IMR-90 (cell line): ENCODE measurements at regions of chr3 and their contacts with region 1.

Region 1: DNA sequence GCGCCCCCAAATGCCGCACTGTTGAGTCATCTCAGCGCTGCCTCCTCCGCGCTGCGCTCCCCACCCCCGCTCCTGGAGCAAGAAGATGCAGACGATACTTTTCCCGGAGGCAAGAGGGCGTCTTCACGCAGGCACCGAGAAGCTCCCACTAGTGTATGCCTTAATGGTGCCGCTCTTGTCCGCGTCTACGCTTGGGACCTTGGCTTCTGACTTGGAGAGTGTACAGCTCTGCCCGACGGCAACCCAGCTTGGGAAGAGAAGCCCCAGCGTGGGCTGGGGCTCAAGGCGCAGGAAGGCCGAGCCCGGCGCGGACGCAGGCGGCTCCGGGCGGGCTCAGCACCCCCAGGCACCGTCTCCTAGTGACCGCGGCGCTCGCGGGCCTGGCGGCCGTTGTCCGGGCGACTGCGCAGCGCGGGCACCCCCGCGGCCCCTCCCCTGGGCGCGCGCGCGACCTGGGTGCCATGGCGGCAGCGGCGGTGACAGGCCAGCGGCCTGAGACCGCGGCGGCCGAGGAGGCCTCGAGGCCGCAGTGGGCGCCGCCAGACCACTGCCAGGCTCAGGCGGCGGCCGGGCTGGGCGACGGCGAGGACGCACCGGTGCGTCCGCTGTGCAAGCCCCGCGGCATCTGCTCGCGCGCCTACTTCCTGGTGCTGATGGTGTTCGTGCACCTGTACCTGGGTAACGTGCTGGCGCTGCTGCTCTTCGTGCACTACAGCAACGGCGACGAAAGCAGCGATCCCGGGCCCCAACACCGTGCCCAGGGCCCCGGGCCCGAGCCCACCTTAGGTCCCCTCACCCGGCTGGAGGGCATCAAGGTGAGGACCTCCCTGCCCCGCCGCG is at the start of gene P4HTM:
- DNase-seq: peak; percentile 93
- ATAC-seq: peak; percentile 89
- H3K4me3 ChIP-seq: peak within 1 kb of the TSS; percentile 72
- H3K27ac ChIP-seq: peak within 1 kb of the TSS; percentile 94
- H3K4me1 ChIP-seq: peaks cover 14% of the 10 kb centered on the region
- H3K27me3 ChIP-seq: no peaks in the 10 kb centered on the region
- CTCF ChIP-seq: peak; percentile 49
- POLR2A ChIP-seq: peak; percentile 77
- RAD21 ChIP-seq: peak; percentile 42
- total RNA-seq, gene P4HTM: 10.4 and 11.1 TPM in 2 replicates

Region 2: DNA sequence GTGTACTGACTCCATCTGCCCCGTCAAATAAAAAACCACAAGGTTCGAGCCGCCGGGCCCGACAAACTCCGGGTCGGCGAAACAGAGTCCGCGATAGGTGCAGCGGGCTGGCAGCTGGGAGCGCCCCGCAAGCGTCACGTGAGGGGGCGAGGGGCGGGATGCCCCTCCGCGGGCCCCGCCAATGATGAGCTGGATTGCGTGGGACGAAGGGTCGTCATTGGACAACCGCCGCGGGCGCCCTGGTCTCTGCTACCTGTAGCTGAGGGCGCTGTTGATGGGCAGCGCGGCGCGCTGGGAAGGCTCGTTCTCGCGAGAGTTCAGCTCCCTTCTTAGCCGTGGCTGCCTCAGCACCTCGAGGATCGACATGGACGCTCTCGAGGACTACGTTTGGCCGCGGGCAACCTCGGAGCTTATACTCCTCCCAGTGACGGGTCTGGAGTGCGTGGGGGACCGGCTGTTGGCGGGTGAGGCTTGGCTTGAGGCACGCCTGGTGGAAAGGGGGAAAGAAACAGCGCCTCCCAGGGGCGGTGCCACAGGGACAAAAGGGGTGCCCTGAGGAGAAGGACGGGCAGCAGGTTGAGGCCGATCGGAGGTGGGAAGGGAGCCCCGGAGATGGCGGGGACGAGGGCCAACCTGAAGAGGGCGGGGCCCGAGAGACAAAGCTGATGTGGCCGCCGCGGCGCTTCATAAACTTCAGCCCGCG is 17.2 kb after region 1 on chr3 and contains the start of gene WDR6:
- CTCF ChIA-PET with region 1: interaction called, 10 read pairs
- POLR2A ChIA-PET with region 1: interaction called, 9 read pairs
- dilution Hi-C with region 1: no loop called
- in situ Hi-C with region 1: no loop called
- intact Hi-C with region 1: loop called (anchors 2 kb)
- DNase-seq: peak; percentile 97
- ATAC-seq: peak; percentile 87
- H3K4me3 ChIP-seq: peak within 1 kb of the TSS; percentile 87
- H3K27ac ChIP-seq: peak within 1 kb of the TSS; percentile 99
- H3K4me1 ChIP-seq: peaks cover 11% of the 10 kb centered on the region
- H3K27me3 ChIP-seq: no peaks in the 10 kb centered on the region
- CTCF ChIP-seq: peak; percentile 36
- POLR2A ChIP-seq: peak; percentile 90
- RAD21 ChIP-seq: peak; percentile 4; the same call in 1 of the 2 replicates
- total RNA-seq, gene WDR6: 55.8 and 60.9 TPM in 2 replicates

Region 3: DNA sequence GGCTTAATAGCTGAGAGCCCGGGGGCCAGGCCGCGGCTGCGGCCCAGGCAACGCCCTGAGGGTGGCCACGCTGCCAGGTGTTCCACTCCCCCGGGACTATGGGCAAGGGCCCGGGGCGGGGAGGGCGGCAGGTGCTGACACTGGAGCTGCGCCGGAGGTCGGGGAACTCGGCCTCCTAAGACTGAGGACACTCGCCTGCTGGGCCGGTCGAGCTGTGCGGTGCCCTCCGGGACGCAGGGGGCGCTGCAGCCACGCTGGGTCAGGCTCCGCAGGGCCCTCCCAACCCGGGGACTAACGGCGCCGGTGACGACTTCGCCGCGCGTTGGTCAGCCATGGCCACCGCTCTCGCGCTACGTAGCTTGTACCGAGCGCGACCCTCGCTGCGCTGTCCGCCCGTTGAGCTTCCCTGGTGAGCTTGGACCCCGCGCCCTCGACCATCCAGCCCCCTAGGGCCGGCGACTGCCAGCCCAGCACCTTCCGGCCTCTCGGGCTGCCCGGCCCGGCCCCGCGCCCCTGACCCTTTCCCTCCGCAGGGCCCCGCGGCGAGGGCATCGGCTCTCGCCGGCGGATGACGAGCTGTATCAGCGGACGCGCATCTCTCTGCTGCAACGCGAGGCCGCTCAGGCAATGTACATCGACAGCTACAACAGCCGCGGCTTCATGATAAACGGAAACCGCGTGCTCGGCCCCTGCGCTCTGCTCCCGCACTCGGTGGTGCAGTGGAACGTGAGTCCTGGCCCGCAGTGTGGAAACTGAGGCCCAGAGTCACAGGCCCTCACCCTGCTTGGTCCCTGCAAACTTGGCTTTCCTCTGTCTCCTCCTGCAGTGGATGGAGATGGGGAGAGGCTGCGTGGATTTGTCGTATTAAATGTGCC is 32.0 kb after region 1 on chr3 and contains the start of gene NDUFAF3:
- CTCF ChIA-PET with region 1: interaction called, 3 read pairs
- POLR2A ChIA-PET with region 1: no interaction called
- dilution Hi-C with region 1: no loop called
- in situ Hi-C with region 1: no loop called
- intact Hi-C with region 1: loop called (anchors 2 kb)
- DNase-seq: peak; percentile 92
- ATAC-seq: peak; percentile 74
- H3K4me3 ChIP-seq: peak within 1 kb of the TSS; percentile 84
- H3K27ac ChIP-seq: peak within 1 kb of the TSS; percentile 93
- H3K4me1 ChIP-seq: peaks cover 10% of the 10 kb centered on the region
- H3K27me3 ChIP-seq: no peaks in the 10 kb centered on the region
- CTCF ChIP-seq: peak; percentile 96
- POLR2A ChIP-seq: peak; percentile 40; the same call in 1 of the 2 replicates
- RAD21 ChIP-seq: no peak
- total RNA-seq, gene NDUFAF3: 26.5 and 43.3 TPM in 2 replicates

Region 4: GRCh38 chr3:49093853-49094767 is 104.1 kb after region 1 on chr3 and contains the start of gene QRICH1:
- CTCF ChIA-PET with region 1: interaction called, 17 read pairs
- POLR2A ChIA-PET with region 1: no interaction called
- dilution Hi-C with region 1: no loop called
- in situ Hi-C with region 1: no loop called
- intact Hi-C with region 1: loop called (anchors 1 kb)
- DNase-seq: peak; percentile 97
- ATAC-seq: peak; percentile 87
- H3K4me3 ChIP-seq: peak within 1 kb of the TSS; percentile 85
- H3K27ac ChIP-seq: peak within 1 kb of the TSS; percentile 82
- H3K4me1 ChIP-seq: peaks cover 2% of the 10 kb centered on the region; the same call in 1 of the 2 replicates
- H3K27me3 ChIP-seq: no peaks in the 10 kb centered on the region
- CTCF ChIP-seq: peak; percentile 71
- POLR2A ChIP-seq: peak; percentile 96
- RAD21 ChIP-seq: peak; percentile 68
- total RNA-seq, gene QRICH1: 62.7 and 72.2 TPM in 2 replicates